ENCODE measurements at regions of chr2 and their contacts with region 1.

Region 1: GRCh38 chr2:25951071-25951547 is 31.2 kb downstream of the KIF3C start:
- DNase-seq: peak; percentile 86
- ATAC-seq: peak; percentile 95
- H3K4me3 ChIP-seq: no peak overlapping the region
- H3K27ac ChIP-seq: no peak overlapping the region
- H3K4me1 ChIP-seq: peaks cover 13% of the 10 kb centered on the region
- H3K27me3 ChIP-seq: no peaks in the 10 kb centered on the region
- CTCF ChIP-seq: peak; percentile 95

Region 2: DNA sequence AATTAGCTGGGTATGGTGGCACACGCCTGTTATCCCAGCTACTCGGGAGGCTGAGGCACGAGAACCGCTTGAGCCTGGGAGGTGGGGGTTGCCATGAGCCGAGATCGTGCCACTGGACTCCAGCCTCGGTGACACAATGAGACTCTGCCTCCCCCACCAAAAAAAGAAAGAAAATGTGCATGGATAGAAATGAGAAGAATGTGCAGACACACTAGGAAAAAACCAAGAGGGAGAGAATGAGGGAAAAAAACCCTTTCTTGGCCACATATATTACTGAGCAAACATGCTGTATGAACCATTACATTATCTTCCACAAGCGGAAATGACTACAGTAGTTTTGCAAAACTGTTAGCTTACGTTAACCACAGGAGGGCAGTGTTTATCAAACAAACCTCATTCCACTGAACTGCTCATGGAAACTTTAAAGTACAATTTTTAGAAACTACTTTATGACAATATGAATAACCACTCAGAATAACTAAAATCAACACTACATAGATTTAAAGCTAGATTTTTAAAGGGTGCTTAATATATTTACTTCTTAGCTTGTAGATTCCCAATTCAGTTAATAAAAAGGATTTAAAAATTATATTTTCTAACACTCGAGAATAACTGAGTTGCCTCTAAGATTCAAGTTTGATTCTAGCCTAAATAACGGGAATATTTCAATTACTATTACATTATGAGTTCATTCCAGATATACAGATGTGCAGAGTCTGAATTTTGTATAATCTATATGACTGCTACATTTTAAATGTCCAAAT is 99.2 kb before region 1 on chr2:
- CTCF ChIA-PET with region 1: interaction called, 9 read pairs
- POLR2A ChIA-PET with region 1: no interaction called
- intact Hi-C with region 1: loop called (anchors 1 kb)
- DNase-seq: peak; percentile 87
- ATAC-seq: peak; percentile 96
- H3K4me3 ChIP-seq: peak overlapping the region; percentile 53
- H3K27ac ChIP-seq: peak overlapping the region; percentile 22; the same call in 1 of the 2 replicates
- H3K4me1 ChIP-seq: peaks cover 14% of the 10 kb centered on the region
- H3K27me3 ChIP-seq: no peaks in the 10 kb centered on the region
- CTCF ChIP-seq: peak; percentile 82

Region 3: DNA sequence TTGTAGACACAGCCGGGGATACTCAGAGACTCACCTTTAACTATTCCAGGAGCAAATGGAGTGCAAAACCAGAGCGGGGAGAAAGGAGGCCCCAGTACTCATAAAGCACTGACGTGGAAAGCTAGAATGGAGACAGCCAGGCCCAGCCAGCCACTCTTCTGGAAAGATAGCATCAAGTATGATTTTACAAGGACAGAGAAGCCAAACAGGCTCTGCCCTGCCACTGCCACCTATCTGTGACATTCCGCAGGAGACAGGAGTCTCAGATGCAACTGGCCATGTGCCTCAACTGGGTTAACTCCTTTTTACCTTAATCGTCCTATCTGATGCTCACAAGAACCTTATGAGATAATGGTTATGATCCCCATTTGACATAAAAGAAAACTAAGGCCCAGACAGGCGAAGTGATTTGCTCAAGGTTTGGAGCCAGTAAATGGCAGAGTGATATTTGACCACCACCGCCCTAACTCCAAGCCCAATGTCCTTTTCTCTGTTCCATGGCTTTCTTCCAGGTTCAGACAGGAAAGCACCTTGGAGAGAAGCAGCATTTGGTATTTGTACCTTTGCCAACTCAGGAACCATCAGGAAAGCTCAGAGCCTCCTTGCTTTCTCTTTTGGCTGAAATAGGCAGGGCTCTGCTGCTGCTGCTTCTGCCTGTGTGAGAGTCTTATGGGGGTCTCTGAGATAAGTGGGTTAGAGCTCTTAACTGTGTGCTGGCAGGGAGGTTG is 15.6 kb after region 1 on chr2:
- CTCF ChIA-PET with region 1: no interaction called
- POLR2A ChIA-PET with region 1: no interaction called
- intact Hi-C with region 1: no loop called
- DNase-seq: no peak
- ATAC-seq: no peak
- H3K4me3 ChIP-seq: no peak overlapping the region
- H3K27ac ChIP-seq: no peak overlapping the region
- H3K4me1 ChIP-seq: peaks cover 10% of the 10 kb centered on the region
- H3K27me3 ChIP-seq: no peaks in the 10 kb centered on the region
- CTCF ChIP-seq: no peak

Region 4: DNA sequence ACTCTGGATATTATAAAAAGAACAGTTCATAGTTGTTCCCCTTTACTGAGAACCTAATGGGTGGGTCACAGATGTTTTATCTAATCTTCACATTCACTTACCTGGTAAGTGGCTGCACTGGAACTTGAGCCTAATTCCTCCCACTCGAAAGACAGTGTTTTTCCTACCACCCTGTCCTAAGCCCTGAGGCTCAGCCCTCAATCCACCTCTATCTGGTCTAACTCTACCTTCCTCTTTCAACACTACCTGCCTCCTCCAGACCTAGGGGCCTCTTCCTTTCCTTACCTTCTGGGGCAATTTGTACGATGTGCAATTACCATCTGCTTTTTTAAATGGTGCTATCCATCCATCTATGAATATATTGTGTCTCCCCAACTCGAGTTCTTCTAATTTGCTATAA is 40.9 kb after region 1 on chr2:
- CTCF ChIA-PET with region 1: no interaction called
- POLR2A ChIA-PET with region 1: no interaction called
- intact Hi-C with region 1: loop called (anchors 1 kb)
- DNase-seq: no peak
- ATAC-seq: peak; percentile 35
- H3K4me3 ChIP-seq: peak overlapping the region; percentile 51; the same call in 1 of the 2 replicates
- H3K27ac ChIP-seq: no peak overlapping the region
- H3K4me1 ChIP-seq: peaks cover 6% of the 10 kb centered on the region
- H3K27me3 ChIP-seq: no peaks in the 10 kb centered on the region
- CTCF ChIP-seq: no peak

Region 5: DNA sequence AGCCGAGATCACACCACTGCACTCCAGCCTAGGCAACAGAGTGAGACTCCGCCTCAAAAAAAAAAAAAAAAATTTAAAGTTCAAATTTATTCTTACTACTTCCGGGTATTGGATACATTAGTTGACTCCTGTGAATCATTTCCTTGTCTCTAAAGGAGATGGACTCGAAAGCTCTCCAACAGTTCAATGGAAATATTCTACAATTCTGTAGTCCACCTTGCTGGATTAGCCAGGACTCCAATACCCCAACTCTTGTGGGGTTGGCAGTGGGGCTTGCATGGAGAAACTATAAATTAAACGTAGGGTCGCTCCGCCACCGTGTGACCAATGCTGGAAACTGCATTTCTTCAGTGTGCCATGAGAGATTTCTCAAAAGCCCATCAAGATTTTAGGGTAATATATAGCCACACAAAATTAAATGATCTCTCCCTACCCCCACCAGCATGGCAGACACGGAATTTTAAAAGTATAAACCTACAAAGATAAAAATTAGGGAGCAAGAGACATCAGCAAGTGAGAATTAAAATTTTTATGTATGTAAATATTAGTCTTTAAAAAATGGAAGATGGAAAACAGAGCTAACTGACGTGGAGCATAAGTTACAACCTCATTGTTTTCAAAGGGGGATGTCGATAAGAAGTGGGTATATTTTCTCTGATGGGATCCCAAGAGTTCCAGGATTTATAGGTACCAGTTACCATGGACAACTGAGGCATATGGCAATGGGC is 194.0 kb after region 1 on chr2:
- CTCF ChIA-PET with region 1: interaction called, 3 read pairs
- POLR2A ChIA-PET with region 1: interaction called, 4 read pairs
- intact Hi-C with region 1: loop called (anchors 1 kb)
- DNase-seq: peak; percentile 80
- ATAC-seq: peak; percentile 39
- H3K4me3 ChIP-seq: no peak overlapping the region
- H3K27ac ChIP-seq: no peak overlapping the region
- H3K4me1 ChIP-seq: peaks cover 18% of the 10 kb centered on the region
- H3K27me3 ChIP-seq: no peaks in the 10 kb centered on the region
- CTCF ChIP-seq: peak; percentile 92

Region 6: DNA sequence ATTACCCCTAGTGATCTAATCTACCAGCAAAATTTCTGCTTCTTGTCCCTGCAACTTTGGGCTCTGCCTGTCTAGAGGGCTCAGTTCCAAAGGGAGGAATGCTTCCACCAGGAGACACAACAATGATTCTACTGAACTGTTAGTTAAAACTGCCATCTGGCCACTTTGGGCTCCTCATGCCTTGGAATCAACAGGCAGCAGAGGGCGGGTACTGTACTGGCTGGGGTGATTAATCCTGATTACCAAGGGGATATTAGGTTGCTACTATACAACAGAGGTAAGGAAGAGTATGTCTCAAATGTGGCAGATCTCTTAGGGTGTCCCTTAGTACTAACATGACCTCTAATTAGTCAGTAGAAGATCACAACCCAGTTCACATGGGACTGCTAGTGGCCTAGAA is 271.9 kb after region 1 on chr2:
- CTCF ChIA-PET with region 1: interaction called, 11 read pairs
- POLR2A ChIA-PET with region 1: no interaction called
- intact Hi-C with region 1: no loop called
- DNase-seq: no peak
- ATAC-seq: no peak
- H3K4me3 ChIP-seq: no peak overlapping the region
- H3K27ac ChIP-seq: no peak overlapping the region
- H3K4me1 ChIP-seq: no peaks in the 10 kb centered on the region
- H3K27me3 ChIP-seq: no peaks in the 10 kb centered on the region
- CTCF ChIP-seq: no peak

Region 7: GRCh38 chr2:26330113-26330549 is 379.0 kb after region 1 on chr2:
- CTCF ChIA-PET with region 1: interaction called, 4 read pairs
- POLR2A ChIA-PET with region 1: no interaction called
- intact Hi-C with region 1: loop called (anchors 1 kb)
- DNase-seq: peak; percentile 86
- ATAC-seq: peak; percentile 99
- H3K4me3 ChIP-seq: no peak overlapping the region
- H3K27ac ChIP-seq: no peak overlapping the region
- H3K4me1 ChIP-seq: no peaks in the 10 kb centered on the region; the same call in 1 of the 2 replicates
- H3K27me3 ChIP-seq: no peaks in the 10 kb centered on the region
- CTCF ChIP-seq: peak; percentile 95

Region 8: GRCh38 chr2:26469092-26469710 is 518.1 kb after region 1 on chr2:
- CTCF ChIA-PET with region 1: no interaction called
- POLR2A ChIA-PET with region 1: no interaction called
- intact Hi-C with region 1: loop called (anchors 5 kb)
- DNase-seq: peak; percentile 91
- ATAC-seq: peak; percentile 76
- H3K4me3 ChIP-seq: no peak overlapping the region
- H3K27ac ChIP-seq: no peak overlapping the region
- H3K4me1 ChIP-seq: no peaks in the 10 kb centered on the region
- H3K27me3 ChIP-seq: no peaks in the 10 kb centered on the region
- CTCF ChIP-seq: peak; percentile 91

Measured in PC-3 (cell line).